ENCODE measurements at regions of chr22 and their contacts with region 1.

Region 1: GRCh38 chr22:20283674-20284066 is 15.6 kb upstream of the RTN4R start:
- DNase-seq: no peak

Region 2: DNA sequence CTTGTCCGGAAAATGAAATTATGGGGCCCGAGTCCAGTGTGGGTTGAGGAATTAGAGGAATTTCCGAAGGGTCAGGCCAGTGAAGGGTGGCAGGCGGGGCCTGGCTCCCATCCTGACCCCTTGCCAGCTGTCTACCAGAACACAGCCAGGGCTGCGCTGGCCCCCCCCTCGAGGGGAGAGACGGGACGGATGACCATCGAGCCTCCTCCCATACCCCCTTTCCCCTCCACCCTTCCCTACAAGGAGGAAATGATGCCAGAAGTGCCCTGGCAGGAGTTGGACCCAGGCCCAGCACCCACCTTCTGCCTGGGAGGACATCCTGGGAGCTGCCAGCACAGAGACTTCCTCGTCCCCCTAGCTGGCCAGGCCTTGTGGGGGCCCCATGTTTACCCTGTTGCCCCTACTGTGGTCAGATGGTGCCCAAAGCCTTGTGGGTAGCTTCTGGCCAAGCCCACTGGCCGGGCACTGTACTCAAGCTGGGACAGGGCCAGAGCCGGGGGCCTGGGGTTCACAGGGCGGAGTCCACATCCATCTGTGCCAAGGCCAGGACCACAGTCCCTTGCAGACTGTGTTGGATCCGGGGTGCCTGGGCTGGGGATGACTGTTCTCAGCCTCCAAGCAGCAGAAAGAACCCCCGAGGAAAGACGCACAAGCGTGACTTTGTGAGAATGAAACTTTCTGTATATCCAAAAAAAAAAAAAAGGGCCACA is 287.9 kb before region 1 on chr22:
- intact Hi-C with region 1: no loop called
- DNase-seq: peak; percentile 89

Region 3: DNA sequence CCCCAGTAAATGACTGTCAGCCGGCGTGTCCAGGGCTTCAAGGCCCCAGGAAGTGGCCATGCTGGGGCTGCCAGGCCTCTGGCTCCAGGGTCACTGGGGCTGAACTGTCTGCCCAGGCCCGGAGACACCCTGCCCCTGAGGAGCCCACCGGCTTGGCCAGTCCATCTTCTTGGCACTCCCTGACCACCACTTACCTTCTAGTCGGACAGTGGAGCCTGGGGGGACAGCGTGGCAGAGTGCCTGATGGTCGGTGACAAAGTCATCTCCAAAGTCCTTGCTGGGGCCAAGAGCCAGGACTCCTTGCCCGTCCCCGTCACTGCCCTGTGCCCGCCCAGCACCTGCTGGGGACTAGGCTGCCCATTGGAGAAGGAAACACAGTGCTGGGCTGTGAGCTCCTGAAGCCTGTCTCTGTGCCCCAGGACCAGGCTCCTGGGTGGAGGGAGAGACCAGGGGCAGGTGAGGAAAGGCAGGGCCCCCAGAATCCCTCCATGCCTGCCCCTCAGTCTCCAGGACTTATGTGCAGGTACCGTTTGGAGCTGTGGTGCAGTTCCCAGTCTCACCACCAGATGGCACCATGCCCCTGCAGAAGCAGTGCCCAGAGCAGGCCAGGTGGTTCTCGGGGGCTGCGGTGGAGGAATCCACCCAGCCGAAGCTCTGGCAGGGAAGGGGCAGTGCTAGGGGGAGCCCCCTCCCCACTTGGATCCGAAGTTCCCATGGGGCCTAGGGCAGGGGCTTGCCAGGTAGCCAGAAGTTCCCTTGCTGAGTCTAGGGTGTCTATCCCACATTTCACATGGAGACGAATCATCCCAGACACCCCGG is 126.8 kb before region 1 on chr22:
- intact Hi-C with region 1: loop called (anchors 2 kb)
- DNase-seq: peak; percentile 94

Region 4: GRCh38 chr22:20298803-20299735 is 15.4 kb after region 1 on chr22:
- intact Hi-C with region 1: no loop called
- DNase-seq: peak; percentile 93

Measured in posterior vena cava (tissue), 2 donors.